B cell (primary cell): ENCODE measurements at regions of chr19 and their contacts with region 1.

Region 1: GRCh38 chr19:45079063-45079910 is at the start of gene GEMIN7:
- DNase-seq: peak; percentile 86
- ATAC-seq: peak; percentile 15
- H3K4me3 ChIP-seq: peak within 1 kb of the TSS; percentile 71 to 98 (median 77)
- H3K4me3 Mint-ChIP-seq: peak within 1 kb of the TSS; percentile 98
- H3K27ac ChIP-seq: peak within 1 kb of the TSS; percentile 62 to 92
- H3K27ac Mint-ChIP-seq: peak within 1 kb of the TSS; percentile 94
- H3K4me1 ChIP-seq: peaks cover 40 to 49% of the 10 kb centered on the region in 2 donors
- H3K4me1 Mint-ChIP-seq: peaks cover 53% of the 10 kb centered on the region
- H3K27me3 ChIP-seq: no peaks in the 10 kb centered on the region
- H3K27me3 Mint-ChIP-seq: no peaks in the 10 kb centered on the region
- CTCF ChIP-seq: peak; percentile 11
- total RNA-seq, gene GEMIN7: 38.2 and 43.0 TPM in 2 replicates

Region 2: GRCh38 chr19:45016388-45017319 is 62.6 kb before region 1 on chr19:
- CTCF ChIA-PET with region 1: interaction called, 3 read pairs
- POLR2A ChIA-PET with region 1: no interaction called
- intact Hi-C with region 1: loop called (anchors 1 kb)
- DNase-seq: peak; percentile 89
- ATAC-seq: peak; percentile 79
- H3K4me3 ChIP-seq: peak overlapping the region in 2 of 5 experiments; percentile 26 to 33
- H3K4me3 Mint-ChIP-seq: peak overlapping the region; percentile 81
- H3K27ac ChIP-seq: peak overlapping the region; percentile 84 to 93
- H3K27ac Mint-ChIP-seq: peak overlapping the region; percentile 94
- H3K4me1 ChIP-seq: peaks cover 7 to 26% of the 10 kb centered on the region in 2 donors
- H3K4me1 Mint-ChIP-seq: peaks cover 18% of the 10 kb centered on the region
- H3K27me3 ChIP-seq: no peaks in the 10 kb centered on the region
- H3K27me3 Mint-ChIP-seq: no peaks in the 10 kb centered on the region
- CTCF ChIP-seq: peak; percentile 70

Region 3: GRCh38 chr19:45059278-45059965 is 19.9 kb before region 1 on chr19:
- CTCF ChIA-PET with region 1: interaction called, 24 read pairs
- POLR2A ChIA-PET with region 1: interaction called, 6 read pairs
- intact Hi-C with region 1: loop called (anchors 2 kb)
- DNase-seq: peak; percentile 90
- ATAC-seq: peak; percentile 88
- H3K4me3 ChIP-seq: no peak overlapping the region
- H3K4me3 Mint-ChIP-seq: no peak overlapping the region
- H3K27ac ChIP-seq: no peak overlapping the region
- H3K27ac Mint-ChIP-seq: peak overlapping the region; percentile 84
- H3K4me1 ChIP-seq: peaks cover 8 to 34% of the 10 kb centered on the region in 2 donors
- H3K4me1 Mint-ChIP-seq: peaks cover 40% of the 10 kb centered on the region
- H3K27me3 ChIP-seq: no peaks in the 10 kb centered on the region
- H3K27me3 Mint-ChIP-seq: no peaks in the 10 kb centered on the region
- CTCF ChIP-seq: peak; percentile 90

Region 4: GRCh38 chr19:45152504-45153338 is 73.4 kb after region 1 on chr19:
- CTCF ChIA-PET with region 1: no interaction called
- POLR2A ChIA-PET with region 1: no interaction called
- intact Hi-C with region 1: no loop called
- DNase-seq: peak; percentile 70
- ATAC-seq: peak; percentile 64
- H3K4me3 ChIP-seq: peak overlapping the region in 4 of 5 experiments; percentile 38 to 51 (median 48)
- H3K4me3 Mint-ChIP-seq: peak overlapping the region; percentile 90
- H3K27ac ChIP-seq: no peak overlapping the region
- H3K27ac Mint-ChIP-seq: peak overlapping the region; percentile 70
- H3K4me1 ChIP-seq: peaks cover 22 to 29% of the 10 kb centered on the region in 2 donors
- H3K4me1 Mint-ChIP-seq: peaks cover 18% of the 10 kb centered on the region
- H3K27me3 ChIP-seq: peaks cover 0 to 42% (median 12%) of the 10 kb centered on the region in 4 experiments
- H3K27me3 Mint-ChIP-seq: peaks cover 27% of the 10 kb centered on the region
- CTCF ChIP-seq: no peak

Region 5: GRCh38 chr19:45178262-45179071 is 99.2 kb after region 1 on chr19 and contains the start of gene BLOC1S3:
- CTCF ChIA-PET with region 1: no interaction called
- POLR2A ChIA-PET with region 1: interaction called, 3 read pairs
- intact Hi-C with region 1: loop called (anchors 1 kb)
- DNase-seq: peak; percentile 100
- ATAC-seq: peak; percentile 88
- H3K4me3 ChIP-seq: peak within 1 kb of the TSS; percentile 93 to 99 (median 95)
- H3K4me3 Mint-ChIP-seq: peak within 1 kb of the TSS; percentile 95
- H3K27ac ChIP-seq: peak within 1 kb of the TSS; percentile 86 to 91
- H3K27ac Mint-ChIP-seq: peak within 1 kb of the TSS; percentile 96
- H3K4me1 ChIP-seq: peaks cover 24 to 35% of the 10 kb centered on the region in 2 donors
- H3K4me1 Mint-ChIP-seq: peaks cover 39% of the 10 kb centered on the region
- H3K27me3 ChIP-seq: no peaks in the 10 kb centered on the region
- H3K27me3 Mint-ChIP-seq: no peaks in the 10 kb centered on the region
- CTCF ChIP-seq: peak; percentile 38
- total RNA-seq, gene BLOC1S3: 21.1 and 31.8 TPM in 2 replicates